ENCODE measurements at regions of chr16 and their contacts with region 1.

Region 1: GRCh38 chr16:53249331-53249730 is 184.9 kb upstream of the RBL2 start:
- DNase-seq: no peak
- ATAC-seq: no peak
- H3K4me3 ChIP-seq: no peak overlapping the region
- H3K27ac ChIP-seq: no peak overlapping the region
- H3K4me1 ChIP-seq: no peaks in the 10 kb centered on the region
- H3K27me3 ChIP-seq: no peaks in the 10 kb centered on the region
- CTCF ChIP-seq: no peak

Region 2: GRCh38 chr16:53291757-53292392 is 42.5 kb after region 1 on chr16:
- intact Hi-C with region 1: loop called in 1 of 2 experiments (anchors 10 kb)
- DNase-seq: no peak
- ATAC-seq: peak in 2 of 4 donors; percentile 50 to 66
- H3K4me3 ChIP-seq: no peak overlapping the region
- H3K27ac ChIP-seq: no peak overlapping the region
- H3K4me1 ChIP-seq: no peaks in the 10 kb centered on the region
- H3K27me3 ChIP-seq: no peaks in the 10 kb centered on the region
- CTCF ChIP-seq: no peak

Region 3: GRCh38 chr16:53323924-53324323 is 74.6 kb after region 1 on chr16:
- intact Hi-C with region 1: no loop called
- DNase-seq: no peak
- ATAC-seq: no peak
- H3K4me3 ChIP-seq: no peak overlapping the region
- H3K27ac ChIP-seq: no peak overlapping the region
- H3K4me1 ChIP-seq: no peaks in the 10 kb centered on the region
- H3K27me3 ChIP-seq: no peaks in the 10 kb centered on the region
- CTCF ChIP-seq: no peak

Region 4: DNA sequence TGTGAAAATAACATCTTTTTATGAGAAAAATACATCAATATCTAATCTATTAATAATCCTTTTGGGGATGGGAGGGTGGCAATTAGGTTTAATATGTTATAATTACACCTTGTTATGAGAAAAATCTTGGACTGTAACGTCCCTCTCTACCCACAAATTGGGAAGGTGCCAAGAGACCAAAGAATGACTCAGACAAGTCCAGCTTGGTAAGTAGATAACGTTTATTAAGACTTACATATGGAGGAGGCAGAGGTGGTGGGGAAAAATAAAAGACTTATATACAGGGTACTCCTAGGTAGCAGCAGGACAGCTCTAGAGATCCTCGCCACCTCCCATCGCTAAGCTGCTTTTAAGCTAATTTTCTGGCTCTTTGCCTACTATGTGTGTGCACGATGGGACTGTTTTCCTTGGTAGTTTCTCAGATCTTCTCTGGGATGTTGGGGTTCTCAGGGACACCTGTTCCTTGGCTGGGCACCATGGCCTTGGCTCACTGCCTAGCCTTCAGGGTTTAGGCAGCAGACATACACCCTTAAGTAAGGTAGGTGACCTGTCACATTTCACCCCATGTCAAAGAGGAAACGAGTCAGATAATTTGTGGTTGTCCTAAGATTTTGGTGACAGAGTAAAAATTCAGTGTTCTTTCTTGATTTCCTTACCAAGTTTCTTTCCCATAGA is 216.4 kb after region 1 on chr16:
- intact Hi-C with region 1: loop called in 1 of 2 experiments (anchors 10 kb)
- DNase-seq: no peak
- ATAC-seq: peak in 2 of 4 donors; percentile 53 to 60
- H3K4me3 ChIP-seq: no peak overlapping the region
- H3K27ac ChIP-seq: no peak overlapping the region
- H3K4me1 ChIP-seq: no peaks in the 10 kb centered on the region
- H3K27me3 ChIP-seq: no peaks in the 10 kb centered on the region
- CTCF ChIP-seq: no peak